GM12878 (cell line): ENCODE measurements at regions of chr1 and their contacts with region 1.

Region 1: DNA sequence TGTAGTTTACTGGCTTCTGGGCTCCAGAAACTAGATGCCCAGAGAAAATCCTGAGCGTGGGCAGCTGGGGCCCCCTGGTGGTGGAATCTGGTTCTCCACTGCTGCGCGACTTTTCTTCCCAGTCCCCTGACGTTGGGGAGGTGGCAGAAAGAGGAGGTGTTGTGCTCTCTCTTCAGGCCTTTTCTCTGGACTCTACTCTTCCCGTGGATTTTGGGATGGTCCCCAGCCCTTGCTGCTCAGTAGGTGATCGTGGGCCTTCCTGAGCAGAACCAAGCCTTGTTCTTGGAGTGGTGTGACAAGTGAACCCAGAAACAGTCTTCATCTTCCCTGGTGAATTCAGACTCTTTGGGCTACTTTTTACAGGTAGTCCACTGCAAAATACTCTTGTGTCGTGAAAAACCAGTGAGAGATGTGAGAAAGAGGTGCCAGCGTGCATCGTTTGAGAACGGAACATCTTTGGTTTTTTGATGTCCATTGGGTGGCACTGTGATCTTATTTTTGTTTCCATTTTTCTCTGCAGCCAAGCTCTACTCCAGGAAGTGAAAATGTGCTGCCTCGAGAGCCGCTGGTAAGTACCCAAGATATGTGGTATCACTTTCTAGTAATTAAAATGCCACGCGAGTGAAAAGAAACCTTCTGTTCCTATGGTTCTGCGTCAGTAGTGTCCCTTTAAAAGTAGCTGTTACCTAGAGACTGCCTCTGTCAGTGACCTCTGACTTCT is 20.2 kb downstream of the PEX14 start:
- DNase-seq: peak; percentile 88
- ATAC-seq: peak; percentile 96
- H3K4me3 ChIP-seq: peak overlapping the region; percentile 56
- H3K27ac ChIP-seq: peak overlapping the region; percentile 83
- H3K4me1 ChIP-seq: peaks cover 25% of the 10 kb centered on the region
- H3K27me3 ChIP-seq: no peaks in the 10 kb centered on the region
- CTCF ChIP-seq: peak; percentile 88 to 93 (median 92)
- EP300 ChIP-seq: peak; percentile 38 to 61; a peak in 1 of 4 replicates
- POLR2A ChIP-seq: no peak
- RAD21 ChIP-seq: peak; percentile 82

Region 2: DNA sequence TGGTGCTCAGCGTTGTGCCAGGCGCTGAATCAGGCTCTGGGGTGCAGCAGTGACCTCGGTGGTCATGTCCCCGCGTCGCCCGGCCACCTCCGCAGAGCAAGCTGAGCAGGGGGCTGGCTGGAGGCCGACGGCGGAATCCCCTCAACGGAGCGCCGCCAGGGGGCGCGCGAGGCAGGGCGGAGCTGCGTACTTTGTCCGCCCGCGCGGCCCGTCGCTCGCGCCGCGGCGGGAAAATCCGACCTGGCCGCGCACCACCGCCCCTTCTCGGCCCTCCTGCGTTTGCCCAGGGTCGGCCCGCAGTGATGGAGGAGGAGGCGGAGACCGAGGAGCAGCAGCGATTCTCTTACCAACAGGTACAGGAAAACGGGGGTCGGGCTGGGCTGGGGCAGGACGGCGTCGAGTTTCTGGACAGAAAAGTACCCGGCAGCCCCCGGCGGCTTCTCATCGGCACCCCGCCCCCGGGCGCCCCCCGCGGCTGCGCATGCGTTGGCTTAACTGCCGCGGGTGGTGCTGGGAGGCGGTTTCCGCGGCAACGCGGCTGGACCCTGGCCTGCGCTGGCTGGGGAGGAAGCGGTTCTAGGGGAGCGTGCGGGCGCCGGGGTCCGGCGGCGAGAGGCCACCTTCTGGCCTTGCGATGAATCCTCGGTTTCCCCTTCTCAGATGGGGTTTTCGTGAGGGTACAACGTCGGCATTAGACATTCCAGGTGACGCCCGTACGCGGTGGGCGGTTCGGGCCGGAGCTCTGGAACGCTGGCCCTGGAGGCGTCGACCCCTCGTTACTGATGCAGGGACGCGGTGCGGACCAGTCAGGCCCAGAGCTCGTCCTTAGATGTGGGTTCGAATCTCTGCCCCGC is 64.5 kb before region 1 on chr1 and contains the start of gene CENPS:
- CTCF ChIA-PET with region 1: interaction called, 292 read pairs
- POLR2A ChIA-PET with region 1: interaction called, 17 read pairs
- RAD21 ChIA-PET with region 1: interaction called, 191 read pairs
- SMC1A ChIA-PET with region 1: interaction called, 122 read pairs
- in situ Hi-C with region 1: loop called (anchors 5 kb)
- intact Hi-C with region 1: loop called (anchors 1 kb)
- DNase-seq: peak; percentile 51
- ATAC-seq: peak; percentile 89
- H3K4me3 ChIP-seq: peak within 1 kb of the TSS; percentile 93
- H3K27ac ChIP-seq: peak within 1 kb of the TSS; percentile 80
- H3K4me1 ChIP-seq: peaks cover 24% of the 10 kb centered on the region
- H3K27me3 ChIP-seq: no peaks in the 10 kb centered on the region
- CTCF ChIP-seq: peak; percentile 87 to 98 (median 93); a peak in 5 of 6 replicates
- EP300 ChIP-seq: no peak
- POLR2A ChIP-seq: peak; percentile 74
- RAD21 ChIP-seq: peak; percentile 51
- polyA plus RNA-seq, gene CENPS: 10.9 to 17.5 TPM

Region 3: DNA sequence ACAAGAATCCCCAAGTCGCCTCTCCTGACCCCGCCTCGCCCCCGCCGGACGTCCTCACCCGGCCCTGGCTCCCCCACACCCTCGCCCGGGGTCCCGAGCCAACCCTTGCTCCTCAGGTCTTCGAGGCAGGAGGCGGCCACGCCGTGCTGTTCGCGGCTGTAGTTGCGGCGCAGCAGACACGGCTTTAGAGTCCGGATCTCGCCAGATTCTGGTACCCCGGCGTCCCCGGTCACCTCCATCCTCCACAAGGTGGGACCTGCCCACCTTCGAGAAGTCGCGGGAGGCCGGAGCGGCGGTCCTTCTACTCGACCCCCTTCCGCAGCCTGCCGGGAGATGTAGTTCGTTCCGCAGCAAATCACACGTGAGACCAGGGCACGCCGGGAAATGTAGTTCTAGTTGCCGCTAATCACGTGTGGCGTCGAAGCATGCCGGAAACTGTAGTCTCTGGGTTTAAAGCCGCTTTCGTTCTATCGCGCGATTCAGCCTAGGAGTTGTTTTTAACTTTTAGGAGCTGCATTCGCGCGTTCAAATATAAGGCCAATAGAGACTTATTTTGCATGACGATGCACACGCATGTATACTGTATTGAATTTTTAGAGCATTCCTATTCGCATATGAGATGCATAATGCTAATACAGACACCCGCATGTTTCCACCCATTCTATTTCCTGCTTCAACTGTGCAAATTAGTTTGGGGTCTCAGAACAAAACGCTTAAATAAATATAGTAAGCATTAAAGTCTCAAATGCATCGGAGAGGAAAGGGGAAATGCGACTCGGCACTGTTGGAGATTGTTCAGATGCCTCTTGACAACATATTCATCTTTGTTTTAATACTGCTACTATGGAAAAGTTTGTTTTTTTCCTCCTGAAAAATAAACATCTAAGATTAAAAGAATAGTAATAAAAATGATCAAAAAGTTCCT is 22.4 kb before region 1 on chr1 and contains the start of gene DFFA:
- CTCF ChIA-PET with region 1: interaction called, 13 read pairs
- POLR2A ChIA-PET with region 1: interaction called, 4 read pairs
- RAD21 ChIA-PET with region 1: interaction called, 14 read pairs
- SMC1A ChIA-PET with region 1: interaction called, 11 read pairs
- in situ Hi-C with region 1: no loop called
- intact Hi-C with region 1: no loop called
- DNase-seq: peak; percentile 95
- ATAC-seq: peak; percentile 86
- H3K4me3 ChIP-seq: peak within 1 kb of the TSS; percentile 79
- H3K27ac ChIP-seq: peak within 1 kb of the TSS; percentile 70
- H3K4me1 ChIP-seq: peaks cover 18% of the 10 kb centered on the region
- H3K27me3 ChIP-seq: no peaks in the 10 kb centered on the region
- CTCF ChIP-seq: no peak
- EP300 ChIP-seq: no peak
- POLR2A ChIP-seq: peak; percentile 91
- RAD21 ChIP-seq: no peak
- polyA plus RNA-seq, gene DFFA: 55.6 to 57.3 TPM

Region 4: GRCh38 chr1:10514490-10515235 is 19.7 kb after region 1 on chr1:
- CTCF ChIA-PET with region 1: interaction called, 117 read pairs
- POLR2A ChIA-PET with region 1: interaction called, 3 read pairs
- RAD21 ChIA-PET with region 1: interaction called, 20 read pairs
- SMC1A ChIA-PET with region 1: interaction called, 71 read pairs
- in situ Hi-C with region 1: no loop called
- intact Hi-C with region 1: no loop called
- DNase-seq: no peak
- ATAC-seq: no peak
- H3K4me3 ChIP-seq: no peak overlapping the region
- H3K27ac ChIP-seq: peak overlapping the region; percentile 86
- H3K4me1 ChIP-seq: peaks cover 68% of the 10 kb centered on the region
- H3K27me3 ChIP-seq: no peaks in the 10 kb centered on the region
- CTCF ChIP-seq: peak; percentile 56 to 71 (median 60); a peak in 5 of 6 replicates
- EP300 ChIP-seq: no peak
- POLR2A ChIP-seq: no peak
- RAD21 ChIP-seq: peak; percentile 78

Region 5: DNA sequence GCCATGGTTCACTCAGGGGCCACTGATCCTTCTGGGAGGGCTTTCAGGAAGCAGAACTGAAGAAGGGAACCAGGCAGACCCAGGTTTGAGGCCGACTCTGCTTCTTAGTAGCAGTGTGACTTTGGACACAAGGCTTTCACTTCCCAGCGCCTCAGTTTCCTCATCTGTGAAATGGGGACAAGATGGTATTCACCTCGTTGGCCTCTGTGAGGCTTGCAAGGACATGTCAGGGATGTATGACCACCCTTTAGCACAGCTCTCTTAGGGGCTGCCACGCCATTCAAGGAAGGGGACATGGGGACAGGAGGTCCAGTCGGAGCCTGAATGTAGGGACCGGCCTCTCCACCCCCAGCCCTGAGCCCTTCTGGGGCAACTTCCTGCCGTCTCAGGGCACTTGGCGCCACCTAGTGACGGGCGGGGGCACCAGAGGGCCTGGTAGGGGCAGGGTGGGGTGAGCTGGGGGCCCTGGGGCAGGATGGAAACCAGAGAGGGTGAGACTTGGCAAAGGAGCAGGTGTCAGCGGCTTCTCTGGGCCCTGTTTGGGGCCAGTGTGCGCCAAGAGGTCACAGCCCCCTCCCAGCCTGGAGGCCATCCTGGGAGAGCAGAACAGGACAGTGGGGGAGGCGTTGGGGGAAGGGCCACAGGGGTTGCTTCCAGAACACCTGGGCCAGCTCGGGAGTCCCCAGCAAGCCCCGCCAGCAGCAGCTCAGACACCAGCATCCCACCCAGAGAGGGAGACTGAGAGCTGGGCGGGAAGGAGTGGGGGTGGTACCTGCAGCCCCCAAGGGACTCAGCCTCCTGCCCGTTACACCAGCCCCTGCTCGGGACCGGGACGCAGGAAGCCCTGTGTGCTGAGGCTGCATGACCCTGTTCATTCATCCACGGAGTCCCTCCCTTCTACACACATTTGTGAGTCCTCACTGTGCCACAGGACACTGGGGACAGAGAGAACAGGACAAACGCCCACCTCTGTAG is 415.1 kb after region 1 on chr1:
- CTCF ChIA-PET with region 1: interaction called, 22 read pairs
- POLR2A ChIA-PET with region 1: no interaction called
- RAD21 ChIA-PET with region 1: interaction called, 3 read pairs
- SMC1A ChIA-PET with region 1: interaction called, 3 read pairs
- in situ Hi-C with region 1: no loop called
- intact Hi-C with region 1: no loop called
- DNase-seq: no peak
- ATAC-seq: peak; percentile 98
- H3K4me3 ChIP-seq: no peak overlapping the region
- H3K27ac ChIP-seq: no peak overlapping the region
- H3K4me1 ChIP-seq: peaks cover 6% of the 10 kb centered on the region; the same call in 1 of the 2 replicates
- H3K27me3 ChIP-seq: peaks cover 0 to 7% of the 10 kb centered on the region in 2 experiments; a peak in 3 of 4 replicates
- CTCF ChIP-seq: peak; percentile 42 to 85 (median 51); a peak in 5 of 6 replicates
- EP300 ChIP-seq: no peak
- POLR2A ChIP-seq: no peak
- RAD21 ChIP-seq: peak; percentile 67